Mammary epithelial cell (primary cell): ENCODE measurements at regions of chr16 and their contacts with region 1.

Region 1: DNA sequence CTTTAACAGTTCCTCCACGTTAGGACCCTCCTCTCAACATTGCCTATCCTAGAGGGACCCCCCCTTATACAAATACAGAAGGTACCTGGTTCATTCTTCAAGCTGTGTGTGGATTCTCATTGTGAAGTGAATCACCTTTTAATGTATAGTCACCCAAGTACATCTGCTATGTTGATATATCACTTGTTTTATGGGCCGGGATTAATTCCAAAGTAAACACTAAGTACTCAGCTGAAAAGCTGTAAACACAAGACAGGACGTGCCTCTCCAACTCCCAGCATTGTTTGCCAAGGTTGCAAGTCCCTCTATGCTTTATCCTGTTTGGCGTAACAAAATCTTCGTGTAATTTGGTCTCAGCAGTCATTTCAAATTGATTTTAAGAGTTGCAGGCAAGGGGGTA is 123.6 kb downstream of the RBFOX1 start:
- DNase-seq: no peak
- H3K4me3 ChIP-seq: no peak overlapping the region
- H3K27ac ChIP-seq: no peak overlapping the region
- H3K4me1 ChIP-seq: no peaks in the 10 kb centered on the region
- H3K27me3 ChIP-seq: no peaks in the 10 kb centered on the region
- CTCF ChIP-seq: no peak

Region 2: GRCh38 chr16:7513429-7513828 is 57.2 kb after region 1 on chr16:
- CTCF ChIA-PET with region 1: no interaction called
- dilution Hi-C with region 1: loop called (anchors 5 kb)
- in situ Hi-C with region 1: no loop called
- intact Hi-C with region 1: no loop called
- DNase-seq: no peak
- H3K4me3 ChIP-seq: no peak overlapping the region
- H3K27ac ChIP-seq: no peak overlapping the region
- H3K4me1 ChIP-seq: no peaks in the 10 kb centered on the region
- H3K27me3 ChIP-seq: no peaks in the 10 kb centered on the region
- CTCF ChIP-seq: no peak

Region 3: GRCh38 chr16:7805686-7806407 is 349.6 kb after region 1 on chr16:
- CTCF ChIA-PET with region 1: no interaction called
- dilution Hi-C with region 1: no loop called
- in situ Hi-C with region 1: no loop called
- intact Hi-C with region 1: no loop called
- DNase-seq: no peak
- H3K4me3 ChIP-seq: no peak overlapping the region
- H3K27ac ChIP-seq: no peak overlapping the region
- H3K4me1 ChIP-seq: no peaks in the 10 kb centered on the region
- H3K27me3 ChIP-seq: no peaks in the 10 kb centered on the region
- CTCF ChIP-seq: no peak